CD8-positive, alpha-beta T cell (primary cell): ENCODE measurements at regions of chr19 and their contacts with region 1.

Region 1: GRCh38 chr19:1064661-1065605 is 2.0 kb upstream of the ARHGAP45 start:
- DNase-seq: peak; percentile 46 to 89 (median 73)
- ATAC-seq: peak; percentile 20
- H3K4me3 ChIP-seq: peak overlapping the region in 1 of 2 experiments; percentile 25
- H3K4me3 Mint-ChIP-seq: peak overlapping the region; percentile 61
- H3K27ac ChIP-seq: no peak overlapping the region
- H3K27ac Mint-ChIP-seq: peak overlapping the region; percentile 93
- H3K4me1 ChIP-seq: peaks cover 42% of the 10 kb centered on the region
- H3K4me1 Mint-ChIP-seq: peaks cover 40% of the 10 kb centered on the region
- H3K27me3 ChIP-seq: no peaks in the 10 kb centered on the region
- H3K27me3 Mint-ChIP-seq: no peaks in the 10 kb centered on the region
- CTCF ChIP-seq: peak; percentile 81

Region 2: DNA sequence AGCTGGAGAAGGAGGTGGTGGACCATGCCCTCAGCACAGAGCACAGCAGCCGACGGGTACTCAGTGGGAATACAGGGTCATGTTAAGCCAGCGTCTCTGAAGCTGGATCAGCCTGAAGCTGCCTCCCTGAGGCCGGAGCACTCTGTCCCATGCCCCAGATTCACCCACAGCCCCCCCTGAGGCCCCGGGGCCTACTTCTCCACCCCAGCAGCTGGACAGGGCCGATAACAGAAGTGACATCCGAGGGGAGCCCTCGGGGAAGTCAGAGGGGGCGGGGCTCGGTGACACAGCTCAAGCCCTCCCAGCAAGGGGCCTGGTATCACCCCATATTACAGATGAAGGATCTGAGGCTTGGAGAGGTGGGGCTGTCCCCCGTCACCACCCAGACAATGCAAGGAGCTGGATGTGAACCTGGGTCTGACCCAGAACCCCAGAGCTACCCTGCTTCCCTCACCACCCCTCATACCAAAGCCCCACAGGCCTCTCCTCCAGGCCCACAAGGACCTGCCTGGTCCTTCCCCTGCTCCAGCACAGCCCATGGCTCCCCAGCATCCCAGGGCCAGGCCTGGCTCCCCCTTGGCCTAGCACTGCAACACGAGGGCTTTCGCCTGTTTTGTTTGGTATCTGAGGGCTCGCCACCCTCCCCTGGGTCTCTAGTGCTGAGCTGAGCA is 157.6 kb before region 1 on chr19:
- CTCF ChIA-PET with region 1: no interaction called
- POLR2A ChIA-PET with region 1: interaction called, 3 read pairs
- intact Hi-C with region 1: loop called in 1 of 2 experiments (anchors 5 kb)
- DNase-seq: peak in 5 of 9 experiments; percentile 45 to 65 (median 51)
- ATAC-seq: no peak
- H3K4me3 ChIP-seq: no peak overlapping the region
- H3K4me3 Mint-ChIP-seq: peak overlapping the region; percentile 61
- H3K27ac ChIP-seq: peak overlapping the region; percentile 47 to 56
- H3K27ac Mint-ChIP-seq: peak overlapping the region; percentile 100
- H3K4me1 ChIP-seq: peaks cover 64% of the 10 kb centered on the region
- H3K4me1 Mint-ChIP-seq: peaks cover 56% of the 10 kb centered on the region
- H3K27me3 ChIP-seq: no peaks in the 10 kb centered on the region
- H3K27me3 Mint-ChIP-seq: no peaks in the 10 kb centered on the region
- CTCF ChIP-seq: no peak

Region 3: DNA sequence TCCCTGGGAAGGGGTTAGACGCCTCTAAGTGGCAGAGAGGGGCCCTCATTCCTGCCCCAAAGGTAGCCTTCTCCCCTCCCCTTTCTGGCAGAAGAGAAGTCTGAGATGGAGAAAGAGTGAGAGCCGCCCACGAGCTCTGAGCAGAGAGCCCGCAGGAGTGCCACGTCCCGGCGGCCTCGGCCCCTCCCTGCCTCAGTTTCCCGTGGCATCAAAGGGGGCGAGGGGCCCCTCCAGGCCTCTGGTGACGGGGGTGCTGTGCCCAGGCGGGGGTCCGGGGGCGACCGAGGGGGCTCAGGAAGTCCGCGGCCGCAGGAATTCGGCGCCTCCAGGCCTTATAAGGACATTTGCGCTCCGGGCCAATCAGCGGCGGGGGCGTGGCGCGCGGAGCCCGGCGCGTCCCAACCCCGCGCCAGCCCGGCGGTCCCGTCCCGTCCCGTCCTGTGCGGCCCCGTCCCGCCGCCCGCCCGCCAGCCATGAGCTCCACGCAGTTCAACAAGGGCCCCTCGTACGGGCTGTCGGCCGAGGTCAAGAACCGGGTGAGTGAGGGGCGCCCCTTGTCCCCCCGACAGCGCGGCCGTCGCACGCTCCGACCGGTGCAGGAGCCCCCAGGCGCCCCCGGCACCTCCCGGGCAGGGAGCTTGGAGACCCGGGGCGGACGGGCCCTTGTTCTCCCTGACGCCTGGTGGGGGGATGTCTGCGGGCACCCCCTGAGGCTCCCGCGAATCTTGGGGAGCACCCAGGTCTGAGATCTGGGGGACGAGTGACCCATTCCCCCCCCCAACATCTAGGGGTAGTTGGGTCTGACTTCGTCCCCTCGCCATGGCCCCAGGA is 38.5 kb before region 1 on chr19 and contains the start of gene CNN2:
- CTCF ChIA-PET with region 1: interaction called, 9 read pairs
- POLR2A ChIA-PET with region 1: interaction called, 647 read pairs
- intact Hi-C with region 1: loop called (anchors 1 to 2 kb)
- DNase-seq: peak in 8 of 9 experiments; percentile 48 to 83 (median 68)
- ATAC-seq: peak; percentile 12
- H3K4me3 ChIP-seq: peak within 1 kb of the TSS; percentile 98 to 100
- H3K4me3 Mint-ChIP-seq: peak within 1 kb of the TSS; percentile 96
- H3K27ac ChIP-seq: peak within 1 kb of the TSS; percentile 74 to 82
- H3K27ac Mint-ChIP-seq: peak within 1 kb of the TSS; percentile 95
- H3K4me1 ChIP-seq: peaks cover 27% of the 10 kb centered on the region
- H3K4me1 Mint-ChIP-seq: peaks cover 31% of the 10 kb centered on the region
- H3K27me3 ChIP-seq: no peaks in the 10 kb centered on the region
- H3K27me3 Mint-ChIP-seq: no peaks in the 10 kb centered on the region
- CTCF ChIP-seq: no peak
- total RNA-seq, gene CNN2: 382 to 392 TPM

Region 4: DNA sequence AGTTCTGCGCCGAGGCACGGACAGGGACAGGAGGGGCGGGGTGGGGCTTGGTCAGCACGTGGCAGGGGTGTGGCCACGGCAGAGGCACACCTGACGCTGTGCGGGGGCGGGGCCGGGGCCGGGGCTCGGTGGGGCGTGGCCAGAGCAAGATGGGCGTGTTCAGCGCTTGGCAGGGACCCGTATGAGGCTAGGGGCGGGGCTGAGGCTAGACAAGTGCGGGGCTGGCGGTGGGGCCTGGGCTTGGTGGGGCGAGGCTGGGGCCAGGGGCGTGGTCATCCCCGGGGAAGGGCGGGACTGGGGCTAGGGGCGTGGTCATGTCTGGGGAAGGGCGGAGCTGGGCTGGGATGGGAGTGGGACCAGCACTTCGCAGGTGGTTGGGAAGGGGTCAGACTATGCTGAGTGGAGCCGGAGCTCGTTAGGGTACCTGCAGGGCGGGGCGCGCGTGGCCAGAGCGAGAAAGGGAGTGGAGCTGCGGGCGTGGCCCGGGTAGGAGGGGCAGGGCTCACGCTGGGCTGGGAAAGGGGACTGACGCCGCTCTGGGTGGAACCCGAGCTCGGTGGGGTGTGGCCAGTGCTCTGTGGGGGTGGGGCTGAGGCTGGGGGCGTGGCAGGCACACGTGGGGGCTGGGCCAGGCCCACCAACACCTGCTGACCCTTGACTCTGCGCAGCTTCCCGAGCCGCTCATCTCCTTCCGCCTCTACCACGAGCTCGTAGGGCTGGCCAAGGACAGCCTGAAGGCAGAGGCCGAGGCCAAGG is 17.4 kb after region 1 on chr19:
- CTCF ChIA-PET with region 1: interaction called, 148 read pairs
- POLR2A ChIA-PET with region 1: interaction called, 1,023 read pairs
- intact Hi-C with region 1: loop called (anchors 1 kb)
- DNase-seq: peak; percentile 75 to 94 (median 84)
- ATAC-seq: peak; percentile 76
- H3K4me3 ChIP-seq: no peak overlapping the region
- H3K4me3 Mint-ChIP-seq: peak overlapping the region; percentile 55
- H3K27ac ChIP-seq: peak overlapping the region; percentile 42 to 54
- H3K27ac Mint-ChIP-seq: peak overlapping the region; percentile 82
- H3K4me1 ChIP-seq: peaks cover 84% of the 10 kb centered on the region
- H3K4me1 Mint-ChIP-seq: peaks cover 40% of the 10 kb centered on the region
- H3K27me3 ChIP-seq: no peaks in the 10 kb centered on the region
- H3K27me3 Mint-ChIP-seq: no peaks in the 10 kb centered on the region
- CTCF ChIP-seq: no peak

Region 5: GRCh38 chr19:1094975-1095701 is 30.2 kb after region 1 on chr19 and contains the start of gene POLR2E:
- CTCF ChIA-PET with region 1: interaction called, 148 read pairs
- POLR2A ChIA-PET with region 1: interaction called, 1,023 read pairs
- intact Hi-C with region 1: loop called in 1 of 2 experiments (anchors 5 kb)
- DNase-seq: peak; percentile 97 to 99 (median 99)
- ATAC-seq: peak; percentile 93
- H3K4me3 ChIP-seq: peak within 1 kb of the TSS; percentile 79 to 86
- H3K4me3 Mint-ChIP-seq: peak within 1 kb of the TSS; percentile 94
- H3K27ac ChIP-seq: peak within 1 kb of the TSS; percentile 58 to 64
- H3K27ac Mint-ChIP-seq: peak within 1 kb of the TSS; percentile 90
- H3K4me1 ChIP-seq: peaks cover 51% of the 10 kb centered on the region
- H3K4me1 Mint-ChIP-seq: peaks cover 41% of the 10 kb centered on the region
- H3K27me3 ChIP-seq: no peaks in the 10 kb centered on the region
- H3K27me3 Mint-ChIP-seq: no peaks in the 10 kb centered on the region
- CTCF ChIP-seq: no peak
- total RNA-seq, gene POLR2E: 75.3 to 76.2 TPM

Region 6: DNA sequence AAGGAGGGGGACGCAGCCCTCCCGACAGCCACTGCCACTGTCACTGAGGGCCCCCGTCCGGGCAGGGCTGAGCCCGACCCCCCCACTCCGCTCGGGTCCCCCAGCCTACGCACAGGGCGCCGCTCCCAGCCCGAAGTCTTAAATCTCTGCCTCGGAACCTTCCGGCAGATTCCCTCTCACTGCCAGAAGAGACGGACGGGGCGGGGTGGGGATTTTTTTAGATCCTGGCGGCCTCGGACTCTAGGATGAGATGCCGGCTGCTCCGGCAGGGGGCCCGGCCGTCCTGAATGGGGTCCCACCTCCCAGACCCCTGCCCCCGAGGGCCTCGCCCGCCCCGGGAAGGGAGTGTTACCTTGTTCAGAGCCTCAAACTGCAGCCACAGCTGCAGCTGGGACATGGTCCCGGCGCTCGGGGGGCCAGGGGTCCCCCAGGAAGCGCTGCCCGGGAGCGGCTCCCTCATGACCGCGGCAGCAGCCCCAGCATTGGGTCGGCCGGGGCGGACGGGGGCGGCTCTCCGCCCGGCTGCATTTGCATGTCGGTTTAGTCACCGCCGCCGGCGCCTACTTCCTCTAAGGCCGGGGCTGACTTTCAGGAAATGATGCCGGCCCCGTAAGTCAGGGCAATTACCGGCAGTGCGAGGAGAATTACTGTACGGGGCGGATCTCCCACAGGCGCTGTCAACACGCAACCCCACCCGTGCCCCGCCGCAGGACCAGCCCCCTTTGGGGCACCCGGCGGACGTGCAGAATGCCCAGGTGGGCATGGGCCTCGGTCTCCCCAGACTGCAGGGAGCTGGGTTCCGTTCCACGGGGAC is 67.0 kb after region 1 on chr19:
- CTCF ChIA-PET with region 1: no interaction called
- POLR2A ChIA-PET with region 1: interaction called, 5 read pairs
- intact Hi-C with region 1: loop called in 1 of 2 experiments (anchors 2 kb)
- DNase-seq: peak; percentile 54 to 93 (median 86)
- ATAC-seq: peak; percentile 66
- H3K4me3 ChIP-seq: peak overlapping the region; percentile 83 to 96
- H3K4me3 Mint-ChIP-seq: peak overlapping the region; percentile 84
- H3K27ac ChIP-seq: peak overlapping the region; percentile 81 to 89
- H3K27ac Mint-ChIP-seq: peak overlapping the region; percentile 92
- H3K4me1 ChIP-seq: peaks cover 46% of the 10 kb centered on the region
- H3K4me1 Mint-ChIP-seq: peaks cover 29% of the 10 kb centered on the region
- H3K27me3 ChIP-seq: no peaks in the 10 kb centered on the region
- H3K27me3 Mint-ChIP-seq: no peaks in the 10 kb centered on the region
- CTCF ChIP-seq: no peak

Region 7: GRCh38 chr19:1249298-1249989 is 184.5 kb after region 1 on chr19:
- CTCF ChIA-PET with region 1: interaction called, 4 read pairs
- POLR2A ChIA-PET with region 1: interaction called, 12 read pairs
- intact Hi-C with region 1: no loop called
- DNase-seq: peak; percentile 89 to 98 (median 95)
- ATAC-seq: peak; percentile 55
- H3K4me3 ChIP-seq: peak overlapping the region; percentile 86 to 88
- H3K4me3 Mint-ChIP-seq: peak overlapping the region; percentile 87
- H3K27ac ChIP-seq: peak overlapping the region; percentile 83 to 84
- H3K27ac Mint-ChIP-seq: peak overlapping the region; percentile 88
- H3K4me1 ChIP-seq: peaks cover 31% of the 10 kb centered on the region
- H3K4me1 Mint-ChIP-seq: peaks cover 10% of the 10 kb centered on the region
- H3K27me3 ChIP-seq: no peaks in the 10 kb centered on the region
- H3K27me3 Mint-ChIP-seq: no peaks in the 10 kb centered on the region
- CTCF ChIP-seq: no peak